ENCODE measurements at regions of chr13 and their contacts with region 1.

Region 1: GRCh38 chr13:73715114-73715910 is 418.9 kb downstream of the KLF12 start:
- DNase-seq: no peak
- H3K4me3 ChIP-seq: no peak overlapping the region
- CTCF ChIP-seq: no peak
- POLR2A ChIP-seq: no peak

Region 2: GRCh38 chr13:72536714-72537394 is 1178.5 kb before region 1 on chr13:
- intact Hi-C with region 1: no loop called
- DNase-seq: no peak
- H3K4me3 ChIP-seq: no peak overlapping the region
- CTCF ChIP-seq: no peak
- POLR2A ChIP-seq: no peak

Region 3: GRCh38 chr13:72792640-72793039 is 922.7 kb before region 1 on chr13:
- intact Hi-C with region 1: loop called (anchors 10 kb)
- DNase-seq: no peak
- H3K4me3 ChIP-seq: no peak overlapping the region
- CTCF ChIP-seq: no peak
- POLR2A ChIP-seq: no peak

Region 4: GRCh38 chr13:73059460-73060201 is 655.7 kb before region 1 on chr13:
- intact Hi-C with region 1: loop called (anchors 10 kb)
- DNase-seq: peak in 1 of 2 donors; percentile 90
- H3K4me3 ChIP-seq: peak overlapping the region; percentile 70
- CTCF ChIP-seq: no peak
- POLR2A ChIP-seq: no peak